ENCODE measurements at regions of chr5 and their contacts with region 1.

Region 1: GRCh38 chr5:139262742-139263445 is 30.6 kb upstream of the MATR3 start:
- DNase-seq: peak; percentile 92
- ATAC-seq: peak; percentile 99

Region 2: DNA sequence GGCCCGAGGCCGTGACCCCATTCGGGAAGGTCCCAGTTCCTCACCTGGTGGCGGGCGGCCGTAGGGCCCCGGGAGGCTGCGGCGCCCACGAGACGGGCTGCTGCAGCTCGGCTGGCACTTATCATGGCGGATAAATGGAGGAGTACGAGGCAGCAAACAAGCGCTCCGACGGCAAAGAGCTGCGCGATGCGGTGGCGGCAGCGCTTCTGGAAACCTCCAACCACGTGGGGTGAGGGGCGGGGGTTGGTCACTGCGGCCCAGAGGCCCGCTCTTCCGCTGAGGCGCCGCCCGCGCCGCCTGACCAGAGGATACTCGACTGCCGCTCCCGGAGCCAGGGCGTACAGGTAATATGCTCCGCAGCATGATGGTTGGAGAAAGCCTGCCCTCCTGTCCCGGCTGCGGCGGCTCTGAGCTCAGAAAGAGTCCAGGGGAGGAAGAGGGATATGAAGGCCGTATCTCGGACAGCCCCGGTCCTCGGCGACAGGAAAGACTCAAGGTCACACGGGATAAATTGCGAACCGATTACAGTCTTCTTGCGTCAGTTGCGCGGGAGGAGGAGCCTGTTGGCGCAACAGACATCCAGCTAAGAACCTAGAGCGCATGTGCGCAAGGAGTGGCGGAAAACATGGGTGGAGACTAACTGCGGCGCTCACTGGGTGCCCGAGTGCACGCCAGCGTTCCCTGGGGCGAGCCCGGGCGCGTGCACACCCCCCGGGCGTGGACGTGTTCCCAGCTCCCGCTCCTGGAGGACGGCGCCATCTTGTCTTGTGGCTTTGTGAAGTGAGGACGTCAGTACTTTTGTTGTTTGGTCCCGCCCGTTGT is 687.5 kb before region 1 on chr5 and contains the start of gene HSPA9:
- intact Hi-C with region 1: loop called (anchors 10 kb)
- DNase-seq: peak; percentile 98
- ATAC-seq: peak; percentile 95
- total RNA-seq, gene HSPA9: 290 TPM

Region 3: DNA sequence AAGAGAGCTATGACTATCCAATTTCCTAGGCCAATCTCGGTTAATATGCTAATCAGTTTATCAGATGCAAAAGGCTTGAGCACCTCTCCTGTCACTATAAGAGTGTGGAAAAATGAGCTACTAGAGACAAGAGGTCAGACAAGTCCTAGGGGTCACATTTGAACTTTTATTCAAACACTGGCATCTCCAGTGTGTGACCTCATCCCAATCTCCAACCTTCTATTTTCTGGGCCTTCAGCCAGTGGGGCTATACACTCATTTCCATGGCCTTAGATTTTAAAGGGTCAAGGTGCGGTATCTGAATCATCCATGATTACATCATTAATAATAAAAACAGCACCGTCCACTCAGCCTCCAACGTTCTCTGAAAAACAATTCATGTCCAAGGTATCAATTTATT is 248.2 kb before region 1 on chr5:
- intact Hi-C with region 1: no loop called
- DNase-seq: no peak
- ATAC-seq: no peak

Region 4: DNA sequence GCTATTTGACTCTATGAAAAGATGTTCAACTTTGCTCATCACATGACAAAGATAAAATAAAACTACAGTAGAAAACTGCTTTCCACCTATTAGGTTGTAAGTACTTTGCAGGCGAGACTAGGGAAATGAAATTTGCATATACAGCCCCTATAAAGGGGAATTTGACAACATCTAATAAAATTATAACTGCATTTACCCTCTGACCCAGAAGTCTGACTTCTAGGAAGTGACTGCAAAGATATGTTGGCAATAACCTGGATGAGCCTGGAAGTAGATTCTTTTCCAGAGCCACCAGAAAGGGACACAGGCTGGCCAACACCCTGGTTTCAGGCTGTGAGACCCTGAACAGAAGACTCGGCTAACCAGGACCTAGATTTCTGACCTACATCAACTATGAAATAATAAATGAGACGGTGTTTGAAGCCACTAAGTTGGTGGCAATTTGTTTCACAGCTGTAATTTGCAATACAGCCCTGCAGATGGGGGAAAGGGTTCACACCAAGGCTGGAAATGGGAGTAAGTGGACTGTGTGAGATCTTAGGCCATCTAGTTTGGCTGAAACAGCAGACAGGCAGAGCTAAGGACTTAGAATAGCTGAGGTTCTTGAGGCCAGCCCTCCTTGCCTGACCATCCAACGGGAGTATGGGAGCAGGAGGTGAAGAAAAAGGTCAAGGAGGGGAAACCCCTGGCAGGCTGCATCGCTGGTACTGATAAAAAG is 171.3 kb before region 1 on chr5:
- intact Hi-C with region 1: loop called (anchors 5 kb)
- DNase-seq: no peak
- ATAC-seq: peak; percentile 94